ENCODE measurements at regions of chr5 and their contacts with region 1.

Region 1: GRCh38 chr5:163564321-163564938 is 59.0 kb downstream of the MAT2B start:
- DNase-seq: peak; percentile 33 to 80
- ATAC-seq: peak; percentile 54 to 70 (median 67)
- H3K4me3 ChIP-seq: no peak overlapping the region
- H3K4me3 Mint-ChIP-seq: peak overlapping the region; percentile 14
- H3K27ac ChIP-seq: no peak overlapping the region
- H3K27ac Mint-ChIP-seq: no peak overlapping the region
- H3K4me1 ChIP-seq: peaks cover 15% of the 10 kb centered on the region
- H3K4me1 Mint-ChIP-seq: peaks cover 18% of the 10 kb centered on the region in 2 donors
- H3K27me3 ChIP-seq: peaks cover 12% of the 10 kb centered on the region
- H3K27me3 Mint-ChIP-seq: peaks cover 48 to 75% of the 10 kb centered on the region in 2 donors
- CTCF ChIP-seq: peak; percentile 97

Region 2: DNA sequence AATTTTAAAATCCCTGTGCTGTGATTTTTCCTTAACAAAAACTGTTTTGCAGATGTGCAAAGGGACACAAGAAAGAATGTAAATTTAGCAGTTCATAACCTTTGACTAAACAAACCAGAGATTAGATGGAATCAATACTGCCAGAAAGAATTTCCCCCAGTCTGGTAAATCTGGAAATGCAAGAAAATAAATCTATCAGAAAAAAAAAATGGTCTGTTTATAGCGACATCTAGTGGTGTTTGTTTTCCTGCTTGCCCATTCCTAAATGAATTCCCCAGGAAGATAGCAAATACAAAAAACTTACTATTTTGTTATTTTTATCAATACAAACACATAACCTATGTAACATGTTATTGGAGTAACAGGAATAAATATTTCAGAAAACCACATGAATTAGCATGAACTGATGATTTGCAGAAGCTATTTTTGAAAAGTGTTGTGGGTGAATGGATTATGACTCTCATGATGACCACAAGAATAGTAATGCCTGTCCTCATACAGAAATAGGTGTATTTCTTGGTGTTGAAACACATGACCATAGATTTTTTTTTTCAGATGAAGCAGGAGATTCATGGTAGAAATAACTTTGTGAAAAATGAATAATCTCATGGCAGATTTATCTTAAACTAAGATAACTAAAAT is 1644.8 kb after region 1 on chr5:
- intact Hi-C with region 1: loop called (anchors 5 kb)
- DNase-seq: peak in 1 of 2 donors; percentile 7
- ATAC-seq: no peak
- H3K4me3 ChIP-seq: no peak overlapping the region
- H3K4me3 Mint-ChIP-seq: no peak overlapping the region
- H3K27ac ChIP-seq: no peak overlapping the region
- H3K27ac Mint-ChIP-seq: no peak overlapping the region
- H3K4me1 ChIP-seq: no peaks in the 10 kb centered on the region
- H3K4me1 Mint-ChIP-seq: no peaks in the 10 kb centered on the region
- H3K27me3 ChIP-seq: no peaks in the 10 kb centered on the region
- H3K27me3 Mint-ChIP-seq: no peaks in the 10 kb centered on the region
- CTCF ChIP-seq: peak; percentile 29

Measured in natural killer cell (primary cell).